ENCODE measurements at regions of chr16 and their contacts with region 1.

Region 1: GRCh38 chr16:71412270-71413160 is 29.3 kb downstream of the TLE7 start:
- DNase-seq: peak; percentile 78
- H3K4me3 ChIP-seq: peak overlapping the region in 1 of 2 experiments; percentile 12; a peak in 2 of 4 replicates
- H3K27ac ChIP-seq: no peak overlapping the region
- H3K4me1 ChIP-seq: no peaks in the 10 kb centered on the region; a peak in 1 of 4 replicates
- H3K27me3 ChIP-seq: peaks cover 20% of the 10 kb centered on the region; the same call in 1 of the 2 replicates
- CTCF ChIP-seq: peak; percentile 81
- EP300 ChIP-seq: no peak
- RAD21 ChIP-seq: peak; percentile 77

Region 2: GRCh38 chr16:71311553-71312158 is 100.9 kb before region 1 on chr16:
- CTCF ChIA-PET with region 1: interaction called, 10 read pairs
- POLR2A ChIA-PET with region 1: no interaction called
- DNase-seq: peak; percentile 61
- H3K4me3 ChIP-seq: no peak overlapping the region; a peak in 1 of 4 replicates
- H3K27ac ChIP-seq: no peak overlapping the region
- H3K4me1 ChIP-seq: no peaks in the 10 kb centered on the region
- H3K27me3 ChIP-seq: no peaks in the 10 kb centered on the region
- CTCF ChIP-seq: peak; percentile 85
- EP300 ChIP-seq: no peak
- RAD21 ChIP-seq: peak; percentile 88

Region 3: GRCh38 chr16:71389330-71389729 is 23.2 kb before region 1 on chr16:
- CTCF ChIA-PET with region 1: interaction called, 13 read pairs
- POLR2A ChIA-PET with region 1: no interaction called
- DNase-seq: no peak
- H3K4me3 ChIP-seq: no peak overlapping the region
- H3K27ac ChIP-seq: no peak overlapping the region
- H3K4me1 ChIP-seq: no peaks in the 10 kb centered on the region
- H3K27me3 ChIP-seq: no peaks in the 10 kb centered on the region; the same call in 1 of the 2 replicates
- CTCF ChIP-seq: no peak
- EP300 ChIP-seq: no peak
- RAD21 ChIP-seq: no peak

Region 4: GRCh38 chr16:71426072-71426879 is 13.8 kb after region 1 on chr16:
- CTCF ChIA-PET with region 1: interaction called, 14 read pairs
- POLR2A ChIA-PET with region 1: no interaction called
- DNase-seq: peak; percentile 69
- H3K4me3 ChIP-seq: peak overlapping the region; percentile 35 to 46; a peak in 2 of 4 replicates
- H3K27ac ChIP-seq: no peak overlapping the region
- H3K4me1 ChIP-seq: no peaks in the 10 kb centered on the region; a peak in 1 of 4 replicates
- H3K27me3 ChIP-seq: peaks cover 13% of the 10 kb centered on the region; the same call in 1 of the 2 replicates
- CTCF ChIP-seq: no peak
- EP300 ChIP-seq: no peak
- RAD21 ChIP-seq: no peak

Region 5: GRCh38 chr16:71461686-71462648 is 49.5 kb after region 1 on chr16 and contains the start of gene ZNF23:
- CTCF ChIA-PET with region 1: interaction called, 11 read pairs
- POLR2A ChIA-PET with region 1: no interaction called
- DNase-seq: peak; percentile 96
- H3K4me3 ChIP-seq: peak within 1 kb of the TSS; percentile 96 to 98
- H3K27ac ChIP-seq: peak within 1 kb of the TSS; percentile 60 to 77
- H3K4me1 ChIP-seq: peaks cover 3 to 11% of the 10 kb centered on the region in 2 experiments; a peak in 3 of 4 replicates
- H3K27me3 ChIP-seq: no peaks in the 10 kb centered on the region
- CTCF ChIP-seq: peak; percentile 42
- EP300 ChIP-seq: no peak; a peak in 1 of 4 replicates
- RAD21 ChIP-seq: no peak
- polyA plus RNA-seq, gene ZNF23: 6.5 and 7.3 TPM in 2 replicates

Region 6: GRCh38 chr16:71504901-71505300 is 92.4 kb after region 1 on chr16:
- CTCF ChIA-PET with region 1: interaction called, 162 read pairs
- POLR2A ChIA-PET with region 1: interaction called, 9 read pairs
- DNase-seq: no peak
- H3K4me3 ChIP-seq: no peak overlapping the region
- H3K27ac ChIP-seq: no peak overlapping the region
- H3K4me1 ChIP-seq: no peaks in the 10 kb centered on the region
- H3K27me3 ChIP-seq: no peaks in the 10 kb centered on the region; the same call in 1 of the 2 replicates
- CTCF ChIP-seq: no peak
- EP300 ChIP-seq: no peak
- RAD21 ChIP-seq: no peak

Region 7: GRCh38 chr16:71610936-71611871 is 198.7 kb after region 1 on chr16:
- CTCF ChIA-PET with region 1: interaction called, 32 read pairs
- POLR2A ChIA-PET with region 1: no interaction called
- DNase-seq: peak; percentile 91
- H3K4me3 ChIP-seq: peak overlapping the region in 1 of 2 experiments; percentile 50; a peak in 3 of 4 replicates
- H3K27ac ChIP-seq: no peak overlapping the region
- H3K4me1 ChIP-seq: peaks cover 0 to 2% of the 10 kb centered on the region in 2 experiments; a peak in 2 of 4 replicates
- H3K27me3 ChIP-seq: peaks cover 9% of the 10 kb centered on the region; the same call in 1 of the 2 replicates
- CTCF ChIP-seq: peak; percentile 79
- EP300 ChIP-seq: no peak
- RAD21 ChIP-seq: peak; percentile 82